H1 (cell line): ENCODE measurements at regions of chr21 and their contacts with region 1.

Region 1: GRCh38 chr21:37463083-37463801 is 96.7 kb downstream of the DYRK1A start:
- DNase-seq: no peak
- H3K4me3 ChIP-seq: no peak overlapping the region
- H3K27ac ChIP-seq: no peak overlapping the region; the same call in 1 of the 2 replicates
- H3K4me1 ChIP-seq: peaks cover 3 to 8% (median 7%) of the 10 kb centered on the region in 4 experiments; a peak in 5 of 7 replicates
- H3K27me3 ChIP-seq: no peaks in the 10 kb centered on the region
- CTCF ChIP-seq: peak in 2 of 3 experiments; percentile 40 to 71; a peak in 3 of 4 replicates
- EP300 ChIP-seq: no peak
- POLR2A ChIP-seq: no peak
- RAD21 ChIP-seq: peak; percentile 38 to 51

Region 2: GRCh38 chr21:37058261-37058660 is 405.0 kb before region 1 on chr21:
- CTCF ChIA-PET with region 1: no interaction called
- POLR2A ChIA-PET with region 1: no interaction called
- DNase-seq: no peak
- H3K4me3 ChIP-seq: no peak overlapping the region
- H3K27ac ChIP-seq: no peak overlapping the region
- H3K4me1 ChIP-seq: peaks cover 5 to 13% (median 9%) of the 10 kb centered on the region in 4 experiments
- H3K27me3 ChIP-seq: no peaks in the 10 kb centered on the region
- CTCF ChIP-seq: no peak
- EP300 ChIP-seq: no peak
- POLR2A ChIP-seq: no peak
- RAD21 ChIP-seq: no peak

Region 3: DNA sequence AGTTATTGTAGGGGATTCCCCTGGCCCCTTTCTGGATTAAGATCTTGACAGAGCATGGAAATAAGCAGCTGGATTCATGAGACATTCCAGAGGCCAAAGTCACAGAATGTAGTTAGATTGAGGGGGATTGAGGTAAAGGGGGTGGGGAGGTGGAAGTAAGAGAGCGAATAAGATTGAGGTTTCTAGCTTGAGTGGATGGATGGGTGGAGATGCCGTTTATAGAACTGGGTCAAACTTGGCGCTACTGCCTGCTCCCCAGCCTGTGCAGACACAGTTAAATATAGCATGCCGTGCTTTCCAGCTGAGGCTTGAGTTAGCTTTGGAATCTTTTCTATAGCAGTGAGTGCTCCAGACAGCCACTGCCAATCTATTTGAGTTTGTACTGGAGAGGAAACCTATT is 11.0 kb before region 1 on chr21:
- CTCF ChIA-PET with region 1: interaction called, 11 read pairs
- POLR2A ChIA-PET with region 1: interaction called, 12 read pairs
- DNase-seq: no peak
- H3K4me3 ChIP-seq: no peak overlapping the region
- H3K27ac ChIP-seq: no peak overlapping the region
- H3K4me1 ChIP-seq: peaks cover 2 to 19% (median 13%) of the 10 kb centered on the region in 4 experiments; a peak in 6 of 7 replicates
- H3K27me3 ChIP-seq: no peaks in the 10 kb centered on the region
- CTCF ChIP-seq: no peak
- EP300 ChIP-seq: no peak
- POLR2A ChIP-seq: no peak
- RAD21 ChIP-seq: no peak

Region 4: DNA sequence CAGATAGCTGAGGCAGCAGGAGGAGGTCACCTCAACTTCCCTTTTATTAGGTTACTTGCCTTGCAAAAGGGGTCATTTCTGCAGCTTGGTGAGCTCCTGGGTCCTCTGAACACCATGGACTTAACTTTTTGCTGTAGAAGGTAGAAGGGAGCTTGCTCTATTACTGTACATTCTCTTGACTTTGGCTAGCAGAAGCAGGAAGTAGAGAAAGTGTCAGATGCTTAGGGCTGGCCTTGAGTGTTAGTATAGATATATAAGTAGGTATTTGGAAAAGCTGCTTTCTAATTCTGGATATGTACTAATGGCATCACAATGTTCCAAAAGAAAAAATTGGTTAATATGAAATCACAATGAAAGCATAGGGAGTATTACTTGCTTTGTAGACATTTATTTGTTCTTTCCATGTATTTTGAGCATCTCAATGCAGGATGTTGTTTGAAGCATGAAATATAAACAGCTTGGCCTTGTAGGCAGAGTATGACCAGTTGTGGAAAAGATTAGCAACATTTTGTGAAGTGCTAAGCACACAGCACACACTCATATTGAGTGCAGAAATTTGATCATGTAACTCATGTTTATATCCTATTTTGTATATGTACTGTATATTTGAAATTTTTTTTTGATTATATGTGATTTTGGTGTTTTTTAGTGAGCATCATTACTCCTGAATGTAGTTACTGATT is 12.1 kb after region 1 on chr21:
- CTCF ChIA-PET with region 1: interaction called, 22 read pairs
- POLR2A ChIA-PET with region 1: interaction called, 3 read pairs
- DNase-seq: no peak
- H3K4me3 ChIP-seq: no peak overlapping the region
- H3K27ac ChIP-seq: no peak overlapping the region
- H3K4me1 ChIP-seq: peaks cover 0 to 4% (median 3%) of the 10 kb centered on the region in 4 experiments; a peak in 3 of 7 replicates
- H3K27me3 ChIP-seq: no peaks in the 10 kb centered on the region
- CTCF ChIP-seq: no peak
- EP300 ChIP-seq: no peak
- POLR2A ChIP-seq: no peak
- RAD21 ChIP-seq: no peak